CD4-positive, alpha-beta T cell (primary cell): ENCODE measurements at regions of chr1 and their contacts with region 1.

Region 1: GRCh38 chr1:64906447-64906846 is 59.9 kb downstream of the JAK1 start:
- DNase-seq: no peak
- ATAC-seq: no peak
- H3K4me3 ChIP-seq: no peak overlapping the region
- H3K4me3 Mint-ChIP-seq: peak overlapping the region; percentile 26
- H3K27ac ChIP-seq: no peak overlapping the region
- H3K27ac Mint-ChIP-seq: peak overlapping the region; percentile 29
- H3K4me1 ChIP-seq: peaks cover 35% of the 10 kb centered on the region
- H3K4me1 Mint-ChIP-seq: peaks cover 97% of the 10 kb centered on the region
- H3K27me3 ChIP-seq: no peaks in the 10 kb centered on the region
- H3K27me3 Mint-ChIP-seq: no peaks in the 10 kb centered on the region
- CTCF ChIP-seq: no peak

Region 2: GRCh38 chr1:64892576-64893573 is 13.6 kb before region 1 on chr1:
- CTCF ChIA-PET with region 1: interaction called, 5 read pairs
- POLR2A ChIA-PET with region 1: no interaction called
- intact Hi-C with region 1: loop called in 1 of 2 experiments (anchors 2 kb)
- DNase-seq: no peak
- ATAC-seq: no peak
- H3K4me3 ChIP-seq: no peak overlapping the region
- H3K4me3 Mint-ChIP-seq: peak overlapping the region; percentile 25
- H3K27ac ChIP-seq: no peak overlapping the region
- H3K27ac Mint-ChIP-seq: peak overlapping the region; percentile 67
- H3K4me1 ChIP-seq: peaks cover 59% of the 10 kb centered on the region
- H3K4me1 Mint-ChIP-seq: peaks cover 99% of the 10 kb centered on the region
- H3K27me3 ChIP-seq: no peaks in the 10 kb centered on the region
- H3K27me3 Mint-ChIP-seq: no peaks in the 10 kb centered on the region
- CTCF ChIP-seq: no peak